Left cardiac atrium (tissue), 4 donors: ENCODE measurements at regions of chr6 and their contacts with region 1.

Region 1: GRCh38 chr6:9412951-9413559 is 977.7 kb upstream of the SLC35B3 start:
- DNase-seq: no peak
- ATAC-seq: peak in 1 of 2 donors; percentile 31

Region 2: DNA sequence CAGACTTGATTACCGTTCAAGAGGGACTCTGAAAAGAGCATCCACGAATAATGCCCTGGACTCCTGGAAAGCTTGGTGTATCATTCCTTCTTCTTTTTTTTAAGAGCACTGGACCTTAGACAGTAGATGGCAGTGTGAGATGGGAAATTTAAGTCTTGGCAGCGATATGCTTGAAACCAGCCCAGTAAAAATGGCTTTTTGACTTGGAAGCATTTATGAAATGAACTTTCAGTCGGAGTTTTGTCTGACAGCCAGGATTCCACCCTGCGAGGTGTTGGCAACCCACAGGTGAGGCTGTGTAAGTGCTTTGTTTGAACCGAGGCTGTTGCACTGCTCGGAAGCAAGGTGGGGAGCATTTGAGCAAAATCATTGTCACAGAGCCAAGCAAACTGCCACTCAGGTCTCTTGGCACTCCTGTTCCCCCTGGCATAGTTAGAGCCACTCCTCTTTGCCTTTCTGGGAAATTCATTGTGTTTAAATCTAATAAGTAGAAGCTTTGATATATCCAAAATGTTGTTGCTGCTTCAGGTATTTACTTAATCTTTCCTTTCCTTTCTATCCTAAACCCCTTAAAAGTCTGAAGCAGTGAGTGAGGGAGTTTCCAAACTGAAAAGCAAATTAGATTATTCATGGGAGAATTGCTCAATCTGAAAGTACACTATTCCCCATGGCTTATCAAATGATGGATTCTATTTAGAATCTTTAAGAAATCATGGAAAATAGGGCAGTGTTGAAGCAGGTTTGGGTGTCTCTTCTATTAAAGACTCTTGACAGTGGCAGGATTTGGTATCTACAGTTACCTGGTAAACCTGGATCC is 704.9 kb before region 1 on chr6:
- intact Hi-C with region 1: loop called in 1 of 2 experiments (anchors 10 kb)
- DNase-seq: no peak
- ATAC-seq: peak; percentile 74 to 77

Region 3: DNA sequence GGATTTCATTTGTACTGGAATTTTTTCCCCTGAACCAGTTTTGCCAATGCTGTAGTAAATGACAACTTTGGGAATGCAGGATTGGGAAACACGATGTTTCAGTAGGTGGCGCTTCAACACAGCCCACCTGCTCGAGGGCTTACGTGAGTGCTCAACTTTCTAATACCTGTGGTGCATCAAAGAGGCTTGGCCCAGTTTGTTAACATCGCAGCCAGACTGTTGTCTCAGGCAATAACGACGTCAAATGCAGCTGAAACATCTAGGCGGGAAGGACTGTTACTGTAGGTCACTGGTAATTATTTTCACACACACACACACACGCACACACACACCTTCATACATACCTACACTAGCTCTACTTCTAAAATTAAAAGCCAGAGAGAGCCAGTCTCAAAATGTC is 162.2 kb before region 1 on chr6:
- intact Hi-C with region 1: loop called in 1 of 2 experiments (anchors 2 kb)
- DNase-seq: peak; percentile 21
- ATAC-seq: peak in 1 of 2 donors; percentile 27

Region 4: GRCh38 chr6:9334979-9335378 is 78.1 kb before region 1 on chr6:
- intact Hi-C with region 1: no loop called
- DNase-seq: no peak
- ATAC-seq: no peak